ENCODE measurements at regions of chr15 and their contacts with region 1.

Region 1: GRCh38 chr15:57706405-57707209 is at the start of gene POLR2M:
- DNase-seq: peak; percentile 96
- H3K4me3 Mint-ChIP-seq: peak within 1 kb of the TSS; percentile 84
- H3K27ac Mint-ChIP-seq: peak within 1 kb of the TSS; percentile 88
- H3K4me1 Mint-ChIP-seq: peaks cover 71% of the 10 kb centered on the region
- H3K27me3 Mint-ChIP-seq: no peaks in the 10 kb centered on the region
- total RNA-seq, gene POLR2M: 84.1 to 86.5 TPM

Region 2: DNA sequence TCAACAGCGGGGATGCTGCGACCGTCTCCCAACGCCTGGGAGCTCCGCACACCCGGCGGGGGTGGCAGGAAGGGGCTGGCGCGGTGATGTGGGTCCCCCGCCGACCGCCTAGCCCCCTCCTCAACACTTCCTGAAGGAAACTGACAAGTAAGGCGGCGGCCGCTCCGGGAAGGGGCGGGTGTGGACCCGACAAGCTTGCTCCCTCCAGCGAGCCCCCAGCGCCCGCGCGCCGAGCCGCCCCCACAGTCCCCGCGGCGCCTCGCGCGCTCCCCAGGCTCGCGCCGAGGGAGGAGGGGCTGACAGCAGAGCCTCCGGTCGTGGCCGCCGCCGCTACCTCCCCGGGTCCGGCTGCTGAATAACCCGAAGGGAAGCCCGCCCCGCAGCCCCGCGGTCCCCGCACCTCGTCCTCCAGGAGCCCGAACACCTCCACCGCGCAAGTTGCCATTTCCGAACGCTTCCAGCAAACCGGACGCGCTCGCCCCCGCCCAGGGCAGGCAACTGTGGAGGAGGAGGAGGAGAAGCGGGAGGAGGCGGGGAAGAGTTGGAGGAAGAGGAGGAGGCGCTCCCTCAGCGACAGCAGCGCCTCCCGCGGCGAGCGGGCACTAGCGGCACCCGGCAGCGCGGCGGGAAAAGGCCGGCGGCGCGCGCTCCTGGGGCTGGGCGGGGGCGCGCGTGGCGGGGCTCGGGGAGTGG is 1713.3 kb before region 1 on chr15 and contains the start of gene NEDD4:
- CTCF ChIA-PET with region 1: no interaction called
- POLR2A ChIA-PET with region 1: no interaction called
- intact Hi-C with region 1: loop called (anchors 5 kb)
- DNase-seq: peak; percentile 81
- H3K4me3 Mint-ChIP-seq: peak within 1 kb of the TSS; percentile 81
- H3K27ac Mint-ChIP-seq: peak within 1 kb of the TSS; percentile 61
- H3K4me1 Mint-ChIP-seq: peaks cover 23% of the 10 kb centered on the region
- H3K27me3 Mint-ChIP-seq: peaks cover 11% of the 10 kb centered on the region
- total RNA-seq, gene NEDD4: 18.5 to 18.7 TPM

Region 3: DNA sequence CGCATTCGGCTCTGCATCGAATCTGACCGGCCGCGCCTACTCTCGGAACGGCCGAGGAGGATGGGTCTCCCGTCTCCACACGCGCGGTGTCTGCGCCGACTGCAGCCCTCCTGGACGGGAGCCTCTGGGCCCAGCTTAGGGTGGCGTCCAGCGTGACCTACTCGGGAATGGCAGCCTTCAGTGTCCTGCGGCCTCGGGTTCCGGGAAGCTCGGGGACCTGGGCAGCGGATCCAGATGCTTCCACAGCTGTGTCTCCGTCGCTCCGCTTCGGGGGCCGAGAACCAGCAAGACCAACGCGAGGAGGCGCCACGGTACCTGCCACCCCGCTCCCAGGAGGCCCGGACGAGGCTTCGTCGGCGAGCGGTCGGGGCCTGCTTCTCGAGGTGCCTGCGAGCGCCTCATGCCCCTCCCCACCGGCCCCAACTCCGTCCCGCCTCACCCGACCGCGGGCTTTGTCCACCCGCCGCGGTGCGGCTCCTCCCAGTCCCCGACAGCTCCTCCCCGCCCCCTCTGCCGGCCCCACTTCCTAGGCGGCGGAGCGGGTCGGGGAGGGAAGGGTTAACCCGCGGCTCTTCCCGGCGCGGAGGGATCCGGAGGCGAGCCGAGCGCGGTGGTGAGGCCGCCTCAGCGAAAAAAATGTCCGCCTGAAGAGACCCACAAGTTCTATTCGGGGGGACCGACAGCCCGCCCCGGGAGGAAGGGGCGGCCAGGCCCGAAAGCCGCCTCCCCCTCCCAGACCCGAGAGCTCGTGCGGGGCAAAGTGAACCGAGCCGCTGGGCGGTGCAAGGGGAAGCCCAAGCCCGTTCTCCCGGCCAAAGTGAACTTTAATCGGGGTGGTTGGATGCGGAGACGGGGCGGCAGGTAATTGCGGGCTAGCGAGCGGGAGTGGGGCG is 788.3 kb before region 1 on chr15 and contains the start of gene TCF12:
- CTCF ChIA-PET with region 1: no interaction called
- POLR2A ChIA-PET with region 1: no interaction called
- intact Hi-C with region 1: loop called (anchors 5 kb)
- DNase-seq: peak; percentile 94
- H3K4me3 Mint-ChIP-seq: peak within 1 kb of the TSS; percentile 81
- H3K27ac Mint-ChIP-seq: peak within 1 kb of the TSS; percentile 82
- H3K4me1 Mint-ChIP-seq: peaks cover 30% of the 10 kb centered on the region
- H3K27me3 Mint-ChIP-seq: no peaks in the 10 kb centered on the region
- total RNA-seq, gene TCF12: 63.7 to 64.6 TPM

Region 4: DNA sequence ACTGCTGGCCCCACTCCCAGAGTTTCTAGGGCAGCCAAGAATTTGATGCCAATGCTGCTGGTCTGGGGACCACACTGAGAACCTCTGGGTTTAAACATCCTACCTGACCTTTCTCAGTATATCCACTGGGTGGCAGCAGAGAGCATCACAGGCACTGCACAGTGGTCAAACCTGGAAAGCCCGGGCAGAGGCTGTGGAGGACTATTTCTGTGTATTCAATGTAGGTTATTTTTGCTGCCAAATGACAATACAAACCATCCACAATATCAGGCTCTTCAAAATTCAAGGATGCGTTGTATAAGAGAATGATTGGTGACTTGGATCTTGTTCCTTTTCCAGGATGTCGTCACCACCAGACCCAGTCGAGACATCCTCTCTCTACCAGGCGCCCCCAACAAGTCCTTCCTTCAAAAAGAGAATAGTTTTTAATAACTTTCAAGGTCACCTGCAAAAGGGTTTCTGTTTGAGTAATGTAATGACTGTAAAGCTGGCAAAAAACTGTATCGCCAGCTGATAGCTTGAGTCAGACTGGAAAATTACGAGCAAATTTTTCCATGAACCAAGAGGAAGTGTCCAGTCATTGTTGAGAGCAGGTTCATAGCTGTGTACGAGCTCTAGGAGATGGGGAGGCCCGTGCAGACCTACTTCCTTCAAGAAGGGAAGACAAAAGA is 145.4 kb before region 1 on chr15:
- CTCF ChIA-PET with region 1: interaction called, 17 read pairs
- POLR2A ChIA-PET with region 1: interaction called, 3 read pairs
- intact Hi-C with region 1: loop called (anchors 1 kb)
- DNase-seq: peak; percentile 73
- H3K4me3 Mint-ChIP-seq: peak overlapping the region; percentile 5
- H3K27ac Mint-ChIP-seq: peak overlapping the region; percentile 74
- H3K4me1 Mint-ChIP-seq: peaks cover 39% of the 10 kb centered on the region
- H3K27me3 Mint-ChIP-seq: peaks cover 2% of the 10 kb centered on the region

Region 5: GRCh38 chr15:57586661-57587424 is 119.8 kb before region 1 on chr15:
- CTCF ChIA-PET with region 1: interaction called, 5 read pairs
- POLR2A ChIA-PET with region 1: interaction called, 3 read pairs
- intact Hi-C with region 1: loop called (anchors 2 kb)
- DNase-seq: no peak
- H3K4me3 Mint-ChIP-seq: no peak overlapping the region
- H3K27ac Mint-ChIP-seq: peak overlapping the region; percentile 26
- H3K4me1 Mint-ChIP-seq: peaks cover 31% of the 10 kb centered on the region
- H3K27me3 Mint-ChIP-seq: peaks cover 16% of the 10 kb centered on the region

Region 6: DNA sequence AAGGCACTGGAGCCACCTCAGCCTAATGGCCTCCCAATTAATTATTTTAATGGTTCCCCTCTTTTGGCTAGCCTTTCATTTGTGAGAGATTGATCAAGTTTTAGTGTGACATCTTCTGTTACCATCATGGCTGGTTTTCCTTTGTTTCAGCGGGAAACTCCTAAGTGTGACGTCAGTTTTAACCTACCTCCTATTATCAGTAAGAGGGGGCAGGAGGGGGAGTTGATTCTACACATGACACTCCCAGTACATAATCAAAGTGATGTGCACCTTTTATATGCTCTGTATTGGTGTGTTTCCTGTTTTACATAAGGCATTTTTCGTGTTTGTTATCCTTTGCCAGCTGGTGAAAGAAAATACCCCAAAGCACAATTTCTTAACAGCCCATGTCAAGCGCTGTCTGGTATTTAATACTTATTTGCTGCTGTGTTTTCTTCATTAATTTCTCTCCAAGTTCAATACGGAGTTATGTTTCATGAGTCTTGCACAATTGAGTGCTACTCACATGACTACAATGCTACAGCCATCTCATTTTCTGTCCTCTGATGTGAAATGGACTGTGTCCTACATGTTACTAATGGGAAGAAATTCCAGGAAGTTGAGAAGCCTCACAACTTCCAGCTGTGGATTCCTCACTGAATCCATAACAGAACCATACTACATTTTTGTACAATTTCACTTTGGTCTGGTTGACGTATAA is 52.3 kb before region 1 on chr15:
- CTCF ChIA-PET with region 1: no interaction called
- POLR2A ChIA-PET with region 1: no interaction called
- intact Hi-C with region 1: no loop called
- DNase-seq: no peak
- H3K4me3 Mint-ChIP-seq: no peak overlapping the region
- H3K27ac Mint-ChIP-seq: no peak overlapping the region
- H3K4me1 Mint-ChIP-seq: no peaks in the 10 kb centered on the region
- H3K27me3 Mint-ChIP-seq: peaks cover 2% of the 10 kb centered on the region

Region 7: GRCh38 chr15:57732526-57733331 is 26.1 kb after region 1 on chr15:
- CTCF ChIA-PET with region 1: interaction called, 15 read pairs
- POLR2A ChIA-PET with region 1: no interaction called
- intact Hi-C with region 1: no loop called
- DNase-seq: peak; percentile 52
- H3K4me3 Mint-ChIP-seq: no peak overlapping the region
- H3K27ac Mint-ChIP-seq: no peak overlapping the region
- H3K4me1 Mint-ChIP-seq: peaks cover 8% of the 10 kb centered on the region
- H3K27me3 Mint-ChIP-seq: no peaks in the 10 kb centered on the region

Region 8: DNA sequence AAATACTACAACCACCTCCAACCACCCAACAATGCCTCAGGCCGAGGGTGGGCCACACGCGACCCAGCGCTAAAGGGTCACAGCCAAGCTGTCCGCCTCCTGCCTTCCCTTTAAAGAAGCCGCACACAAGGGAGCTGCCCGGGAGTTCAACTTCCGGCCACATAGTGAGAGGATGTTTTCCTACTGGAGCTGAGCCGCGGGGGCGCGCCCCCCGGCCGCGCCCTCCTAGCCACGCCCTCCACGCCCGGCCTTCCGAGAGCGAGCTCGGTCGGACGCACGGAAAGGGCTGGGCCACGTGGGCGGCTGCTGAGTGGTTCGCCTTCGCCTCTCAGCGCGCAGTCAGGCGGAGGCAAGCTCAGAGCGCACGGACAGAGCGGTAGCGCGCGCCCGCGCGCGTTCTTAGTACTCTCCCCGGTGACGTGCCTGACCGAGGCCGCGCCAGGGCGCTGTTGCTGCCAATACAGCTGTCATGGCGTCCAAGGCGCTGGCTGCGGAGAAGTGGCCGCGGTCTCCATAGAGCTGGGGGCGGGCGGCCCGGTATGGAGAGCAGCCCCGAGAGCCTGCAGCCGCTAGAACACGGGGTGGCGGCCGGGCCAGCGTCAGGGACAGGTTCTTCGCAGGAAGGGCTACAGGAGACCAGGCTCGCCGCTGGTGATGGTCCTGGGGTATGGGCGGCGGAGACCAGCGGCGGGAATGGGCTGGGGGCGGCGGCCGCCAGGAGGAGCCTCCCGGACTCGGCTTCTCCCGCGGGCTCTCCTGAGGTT is 1064.4 kb after region 1 on chr15 and contains the start of gene MINDY2:
- CTCF ChIA-PET with region 1: no interaction called
- POLR2A ChIA-PET with region 1: no interaction called
- intact Hi-C with region 1: loop called (anchors 2 kb)
- DNase-seq: peak; percentile 97
- H3K4me3 Mint-ChIP-seq: no peak within 1 kb of the TSS
- H3K27ac Mint-ChIP-seq: peak within 1 kb of the TSS; percentile 73
- H3K4me1 Mint-ChIP-seq: peaks cover 9% of the 10 kb centered on the region
- H3K27me3 Mint-ChIP-seq: no peaks in the 10 kb centered on the region
- total RNA-seq, gene MINDY2: 8.0 to 11.6 TPM

Measured in activated CD4-positive, alpha-beta memory T cell treated with anti-CD3 and anti-CD28 coated beads for 36 hours (primary cell).